Right ventricle myocardium inferior (tissue), 1 donor: ENCODE measurements at regions of chr17 and their contacts with region 1.

Region 1: DNA sequence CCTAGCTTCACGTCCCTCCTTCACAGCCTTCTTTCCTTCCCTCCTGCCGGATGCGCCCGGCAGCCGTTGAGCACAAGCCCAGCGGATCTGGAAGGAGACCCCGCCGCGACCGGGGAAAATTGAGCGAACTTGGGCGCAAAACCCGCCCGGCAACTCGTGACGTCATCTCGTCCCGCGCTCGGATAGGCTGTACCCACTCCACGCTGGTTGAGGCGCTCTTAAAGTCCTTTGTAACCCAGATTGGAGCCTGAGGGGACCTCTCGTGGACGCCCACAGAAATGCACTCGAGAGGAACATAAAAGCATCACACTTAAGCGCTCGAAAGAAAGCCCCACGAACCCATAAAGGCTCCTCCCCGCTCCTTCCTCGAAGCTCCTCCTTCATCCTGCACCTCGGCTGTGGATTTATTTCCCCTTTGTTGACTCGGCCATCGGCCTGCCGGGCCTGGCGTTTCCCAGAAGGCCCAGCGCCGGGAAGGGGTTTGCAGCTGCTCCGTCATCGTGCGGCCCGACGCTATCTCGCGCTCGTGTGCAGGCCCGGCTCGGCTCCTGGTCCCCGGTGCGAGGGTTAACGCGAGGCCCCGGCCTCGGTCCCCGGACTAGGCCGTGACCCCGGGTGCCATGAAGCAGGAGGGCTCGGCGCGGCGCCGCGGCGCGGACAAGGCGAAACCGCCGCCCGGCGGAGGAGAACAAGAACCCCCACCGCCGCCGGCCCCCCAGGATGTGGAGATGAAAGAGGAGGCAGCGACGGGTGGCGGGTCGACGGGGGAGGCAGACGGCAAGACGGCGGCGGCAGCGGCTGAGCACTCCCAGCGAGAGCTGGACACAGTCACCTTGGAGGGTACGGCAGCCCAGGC is at the start of gene PSMD3:
- DNase-seq: peak; percentile 98
- ATAC-seq: peak; percentile 98
- total RNA-seq, gene PSMD3: 86.9 TPM

Region 2: DNA sequence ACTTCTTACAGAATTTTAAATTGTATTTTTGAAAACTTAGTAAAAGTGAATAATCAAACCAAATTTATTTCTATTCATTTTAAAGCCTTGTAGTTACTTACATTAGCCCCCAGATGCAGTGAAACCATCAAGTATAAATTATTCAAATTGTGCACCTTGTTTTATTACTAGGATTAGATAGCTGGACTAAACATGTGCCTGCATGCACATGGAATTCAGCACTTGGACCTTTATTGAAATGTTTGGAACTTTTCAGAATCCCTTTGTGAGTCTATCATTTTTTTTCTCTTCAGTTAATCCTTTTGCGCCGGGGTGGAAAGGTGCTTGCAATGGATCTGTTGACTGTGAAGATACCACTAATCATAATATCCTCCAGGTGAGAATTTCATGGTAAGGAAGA is 107.8 kb before region 1 on chr17:
- intact Hi-C with region 1: loop called (anchors 2 kb)
- DNase-seq: no peak
- ATAC-seq: no peak

Region 3: GRCh38 chr17:39927929-39928857 is 52.4 kb before region 1 on chr17:
- intact Hi-C with region 1: loop called (anchors 2 kb)
- DNase-seq: peak; percentile 81
- ATAC-seq: peak; percentile 56

Region 4: GRCh38 chr17:39963829-39964228 is 16.8 kb before region 1 on chr17:
- intact Hi-C with region 1: loop called (anchors 1 kb)
- DNase-seq: no peak
- ATAC-seq: no peak

Region 5: DNA sequence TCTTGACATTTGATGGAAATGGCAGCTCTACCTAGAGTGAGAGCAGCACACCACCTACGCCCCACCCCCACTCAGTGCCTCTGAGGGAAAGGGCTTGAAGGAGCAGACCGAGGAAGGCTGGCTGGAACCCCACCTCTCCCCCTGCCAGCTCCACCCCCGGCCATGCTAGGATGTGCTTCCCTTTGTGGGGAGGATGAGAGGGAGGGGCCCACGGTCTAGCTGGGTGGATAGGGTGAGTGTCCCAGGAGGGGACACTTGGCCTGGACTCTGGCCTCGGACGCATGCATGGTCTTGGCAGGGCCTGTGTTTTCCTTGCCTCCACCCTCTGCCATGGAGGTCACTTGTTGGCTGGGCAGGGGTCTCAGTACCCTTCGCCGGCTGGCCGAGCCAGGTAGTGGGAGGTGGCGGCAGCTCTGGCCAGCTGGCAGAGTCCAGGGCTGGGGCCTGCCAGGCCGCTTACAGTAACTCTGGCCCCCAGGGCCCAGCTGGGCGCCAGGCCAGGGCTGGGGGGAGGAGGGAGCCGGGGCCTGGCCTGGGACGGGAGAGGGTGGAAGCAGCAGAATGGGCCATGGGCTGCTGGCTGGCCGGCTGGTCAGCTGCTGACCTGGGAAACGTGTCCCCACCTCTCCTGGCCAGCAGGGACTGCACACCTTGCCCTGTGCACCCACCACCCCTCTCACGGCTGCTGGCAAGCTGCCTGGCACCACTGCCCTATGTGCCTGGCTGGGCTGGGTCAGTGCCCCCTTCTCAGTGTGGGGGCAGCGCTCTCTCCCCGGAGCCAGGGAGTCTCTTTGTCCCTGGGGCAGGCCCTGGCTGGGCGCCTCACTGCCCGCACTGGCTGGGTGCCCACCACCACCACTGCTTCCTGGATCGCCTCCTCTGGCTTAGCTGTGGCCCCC is 351.4 kb after region 1 on chr17:
- intact Hi-C with region 1: no loop called
- DNase-seq: peak; percentile 95
- ATAC-seq: peak; percentile 92